HEK293 (cell line): ENCODE measurements at regions of chr7 and their contacts with region 1.

Region 1: DNA sequence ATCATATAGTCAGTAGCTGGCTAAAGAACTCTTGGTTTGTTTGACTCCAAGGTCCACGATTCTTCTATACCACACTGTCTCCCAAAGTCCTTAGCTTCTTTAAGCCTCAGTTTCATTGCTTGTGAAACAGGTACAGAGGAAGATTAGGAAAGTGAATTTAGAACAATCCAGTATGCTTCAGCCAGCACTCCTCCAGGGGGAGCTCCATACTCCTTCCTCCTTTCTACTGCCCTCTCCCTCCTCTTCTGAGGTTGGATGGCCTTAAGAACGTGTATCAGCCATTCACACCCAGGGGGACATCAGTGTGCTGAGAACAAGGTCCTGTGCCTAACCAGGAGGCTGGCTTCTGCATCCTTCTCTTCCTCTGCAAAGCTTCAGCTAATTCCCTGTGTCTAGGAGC is 54.8 kb upstream of the CALD1 start:
- H3K4me3 ChIP-seq: no peak overlapping the region
- H3K27ac ChIP-seq: no peak overlapping the region
- H3K4me1 ChIP-seq: no peaks in the 10 kb centered on the region
- CTCF ChIP-seq: peak; percentile 53

Region 2: GRCh38 chr7:134737566-134738345 is 13.2 kb after region 1 on chr7:
- CTCF ChIA-PET with region 1: interaction called, 12 read pairs
- POLR2A ChIA-PET with region 1: no interaction called
- H3K4me3 ChIP-seq: no peak overlapping the region
- H3K27ac ChIP-seq: no peak overlapping the region
- H3K4me1 ChIP-seq: no peaks in the 10 kb centered on the region
- CTCF ChIP-seq: no peak

Region 3: DNA sequence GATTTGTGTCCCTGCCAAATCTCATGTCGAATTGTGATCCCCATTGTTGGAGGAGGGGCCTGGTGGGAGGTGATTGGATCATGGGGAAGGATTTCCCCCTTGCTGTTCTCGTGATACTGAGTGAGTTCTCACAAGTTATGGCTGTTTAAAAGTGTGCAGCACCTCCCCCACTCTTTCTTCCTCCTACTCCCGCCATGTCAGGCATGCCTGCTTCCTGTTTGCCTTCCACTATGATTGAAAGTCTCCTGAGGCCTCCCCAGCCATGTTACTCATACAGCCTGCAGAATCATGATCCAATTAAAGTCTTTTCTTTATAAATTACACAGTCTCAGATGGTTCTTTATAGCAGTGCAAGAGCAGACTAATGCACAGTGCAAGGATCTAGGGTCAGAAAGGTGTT is 130.2 kb after region 1 on chr7:
- CTCF ChIA-PET with region 1: interaction called, 11 read pairs
- POLR2A ChIA-PET with region 1: no interaction called
- H3K4me3 ChIP-seq: no peak overlapping the region
- H3K27ac ChIP-seq: no peak overlapping the region
- H3K4me1 ChIP-seq: no peaks in the 10 kb centered on the region
- CTCF ChIP-seq: no peak

Region 4: DNA sequence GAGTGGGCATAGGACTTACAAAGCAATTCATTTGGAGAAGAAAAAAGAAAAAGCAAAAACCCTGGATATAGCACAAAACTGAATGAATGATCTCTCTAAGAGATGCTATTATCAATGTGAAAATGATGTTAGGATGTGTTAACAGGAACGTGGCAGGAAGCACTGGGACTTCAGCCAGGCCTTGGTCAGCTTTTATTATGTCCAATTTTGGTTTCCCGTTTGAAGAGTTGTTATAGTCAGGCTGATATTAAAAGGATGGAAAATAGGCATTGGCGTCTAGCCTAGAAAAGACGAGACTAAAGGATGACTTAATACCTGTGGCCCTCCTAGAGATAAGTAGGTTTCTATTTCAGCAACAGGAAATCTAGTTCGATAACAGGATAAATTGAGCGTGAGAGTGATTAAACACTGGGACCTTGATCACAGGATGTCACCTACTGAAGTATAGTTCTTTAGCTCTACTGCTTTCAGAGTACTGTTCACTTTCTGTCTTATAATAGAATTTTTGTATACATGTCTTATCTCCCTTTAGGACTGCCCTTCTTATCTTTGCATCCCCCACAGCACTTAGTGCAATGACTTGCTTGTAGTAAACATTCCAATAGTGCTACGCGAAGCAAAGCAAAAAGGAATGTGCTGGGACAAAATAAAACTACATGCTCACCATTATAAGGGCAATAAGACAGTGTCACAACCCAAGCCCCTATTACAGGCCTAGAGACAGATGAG is 161.9 kb after region 1 on chr7:
- CTCF ChIA-PET with region 1: no interaction called
- POLR2A ChIA-PET with region 1: no interaction called
- H3K4me3 ChIP-seq: no peak overlapping the region
- H3K27ac ChIP-seq: peak overlapping the region; percentile 40
- H3K4me1 ChIP-seq: peaks cover 20% of the 10 kb centered on the region
- CTCF ChIP-seq: no peak

Region 5: GRCh38 chr7:134943764-134944400 is 219.3 kb after region 1 on chr7:
- CTCF ChIA-PET with region 1: interaction called, 10 read pairs
- POLR2A ChIA-PET with region 1: no interaction called
- H3K4me3 ChIP-seq: no peak overlapping the region
- H3K27ac ChIP-seq: no peak overlapping the region
- H3K4me1 ChIP-seq: no peaks in the 10 kb centered on the region
- CTCF ChIP-seq: no peak

Region 6: DNA sequence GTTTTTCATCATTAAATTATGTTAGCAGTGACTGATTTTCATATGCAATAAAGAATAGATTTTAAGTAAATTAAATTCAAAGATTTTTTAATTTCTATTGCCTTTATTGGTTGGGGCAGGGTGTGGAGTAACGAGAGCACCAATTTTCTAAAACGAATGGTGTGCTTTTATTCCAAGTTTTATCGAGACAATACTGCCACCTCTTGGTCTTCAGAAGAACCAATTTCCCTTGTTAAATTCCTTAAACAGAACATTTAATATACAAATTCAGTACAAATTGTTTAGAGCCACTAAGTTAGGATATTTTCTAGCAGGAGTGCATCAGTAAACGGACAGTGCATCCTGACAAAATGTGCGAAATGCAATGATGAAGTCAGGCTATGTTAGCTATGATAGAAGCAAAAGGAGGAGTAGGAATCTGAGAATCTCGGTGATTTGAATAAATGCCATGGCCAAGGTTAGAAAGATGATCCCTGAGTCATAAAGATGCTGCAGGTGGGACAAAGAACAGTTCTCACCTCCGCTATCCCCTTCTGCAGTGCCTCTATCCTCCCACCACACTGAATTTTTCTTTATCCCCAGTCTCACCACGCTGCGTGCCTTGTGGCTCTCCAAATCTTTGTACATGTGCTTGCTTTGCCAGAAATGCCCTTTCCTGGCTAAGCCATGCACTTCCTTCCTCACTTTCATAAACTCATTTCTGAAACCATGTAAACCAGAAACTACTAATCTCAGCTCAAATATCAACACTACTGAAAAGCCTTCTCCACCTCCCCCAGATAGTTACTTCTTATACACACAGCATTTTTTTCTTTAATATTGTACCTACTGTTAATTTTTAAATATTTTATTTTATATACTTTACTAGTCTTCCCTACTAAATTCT is 229.8 kb after region 1 on chr7:
- CTCF ChIA-PET with region 1: interaction called, 10 read pairs
- POLR2A ChIA-PET with region 1: no interaction called
- H3K4me3 ChIP-seq: no peak overlapping the region
- H3K27ac ChIP-seq: no peak overlapping the region
- H3K4me1 ChIP-seq: no peaks in the 10 kb centered on the region
- CTCF ChIP-seq: no peak